ENCODE measurements at regions of chr3 and their contacts with region 1.

Region 1: GRCh38 chr3:101271728-101272127 is 48.6 kb downstream of the IMPG2 start:
- DNase-seq: no peak
- ATAC-seq: no peak
- H3K4me3 ChIP-seq: no peak overlapping the region
- H3K27ac ChIP-seq: no peak overlapping the region
- H3K4me1 ChIP-seq: no peaks in the 10 kb centered on the region
- H3K27me3 ChIP-seq: no peaks in the 10 kb centered on the region
- CTCF ChIP-seq: no peak
- EP300 ChIP-seq: no peak
- POLR2A ChIP-seq: no peak
- RAD21 ChIP-seq: no peak

Region 2: DNA sequence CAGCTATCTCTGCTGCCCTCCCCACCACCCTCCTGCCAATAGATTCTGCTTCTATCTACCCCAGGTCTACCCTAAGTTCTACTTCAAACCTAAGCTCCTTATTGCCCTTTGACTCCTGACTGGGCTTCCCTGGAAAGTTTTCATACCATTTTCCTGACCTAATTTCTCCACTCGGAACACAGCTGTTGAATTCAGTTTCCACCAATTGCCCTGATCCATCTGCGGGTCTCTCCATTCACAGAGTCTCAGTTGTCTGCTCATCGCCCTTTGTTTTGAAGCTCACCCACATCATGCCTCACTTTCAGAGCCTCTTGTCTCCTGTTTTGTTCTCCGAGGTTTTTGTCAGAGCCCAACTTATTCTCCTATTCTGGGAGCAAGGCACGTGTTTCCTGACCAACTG is 221.7 kb before region 1 on chr3:
- CTCF ChIA-PET with region 1: no interaction called
- POLR2A ChIA-PET with region 1: no interaction called
- RAD21 ChIA-PET with region 1: no interaction called
- SMC1A ChIA-PET with region 1: no interaction called
- in situ Hi-C with region 1: no loop called
- intact Hi-C with region 1: no loop called
- DNase-seq: no peak
- ATAC-seq: no peak
- H3K4me3 ChIP-seq: no peak overlapping the region
- H3K27ac ChIP-seq: no peak overlapping the region
- H3K4me1 ChIP-seq: no peaks in the 10 kb centered on the region
- H3K27me3 ChIP-seq: no peaks in the 10 kb centered on the region
- CTCF ChIP-seq: no peak
- EP300 ChIP-seq: no peak
- POLR2A ChIP-seq: no peak
- RAD21 ChIP-seq: no peak

Region 3: GRCh38 chr3:101383156-101383575 is 111.4 kb after region 1 on chr3:
- CTCF ChIA-PET with region 1: no interaction called
- POLR2A ChIA-PET with region 1: no interaction called
- RAD21 ChIA-PET with region 1: no interaction called
- SMC1A ChIA-PET with region 1: no interaction called
- in situ Hi-C with region 1: no loop called
- intact Hi-C with region 1: no loop called
- DNase-seq: no peak
- ATAC-seq: no peak
- H3K4me3 ChIP-seq: no peak overlapping the region
- H3K27ac ChIP-seq: no peak overlapping the region
- H3K4me1 ChIP-seq: peaks cover 11% of the 10 kb centered on the region; the same call in 1 of the 2 replicates
- H3K27me3 ChIP-seq: no peaks in the 10 kb centered on the region
- CTCF ChIP-seq: no peak
- EP300 ChIP-seq: no peak
- POLR2A ChIP-seq: no peak
- RAD21 ChIP-seq: no peak

Region 4: GRCh38 chr3:101512646-101513418 is 241.1 kb after region 1 on chr3 and contains the start of gene SENP7:
- CTCF ChIA-PET with region 1: no interaction called
- POLR2A ChIA-PET with region 1: interaction called, 11 read pairs
- RAD21 ChIA-PET with region 1: no interaction called
- SMC1A ChIA-PET with region 1: no interaction called
- in situ Hi-C with region 1: no loop called
- intact Hi-C with region 1: no loop called
- DNase-seq: peak; percentile 48
- ATAC-seq: peak; percentile 79
- H3K4me3 ChIP-seq: peak within 1 kb of the TSS; percentile 97
- H3K27ac ChIP-seq: peak within 1 kb of the TSS; percentile 97
- H3K4me1 ChIP-seq: no peaks in the 10 kb centered on the region
- H3K27me3 ChIP-seq: no peaks in the 10 kb centered on the region
- CTCF ChIP-seq: no peak
- EP300 ChIP-seq: no peak
- POLR2A ChIP-seq: peak; percentile 6; the same call in 1 of the 2 replicates
- RAD21 ChIP-seq: no peak
- polyA plus RNA-seq, gene SENP7: 2.6 to 2.8 TPM